T-cell (primary cell): ENCODE measurements at regions of chr5 and their contacts with region 1.

Region 1: DNA sequence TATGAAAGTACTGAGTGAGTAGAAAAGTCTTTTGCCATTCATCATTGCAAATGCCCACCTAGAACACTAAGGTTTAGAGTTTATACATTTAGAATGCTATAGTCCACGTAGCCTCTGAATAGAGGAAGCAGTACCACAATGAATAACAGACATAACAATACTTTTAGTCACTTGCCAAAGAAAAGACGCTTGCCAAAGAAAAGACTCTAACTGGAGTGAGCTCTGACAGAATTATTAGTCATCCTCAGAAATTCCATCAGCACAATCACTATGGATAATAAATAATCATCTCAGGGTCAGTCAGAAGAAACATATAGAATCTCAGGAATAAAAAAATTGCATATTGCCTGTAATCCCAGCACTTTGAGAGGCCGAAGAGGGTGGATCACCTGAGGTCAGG is 168.5 kb upstream of the TARS1 start:
- DNase-seq: no peak
- ATAC-seq: no peak
- H3K4me3 ChIP-seq: no peak overlapping the region
- H3K4me3 Mint-ChIP-seq: no peak overlapping the region
- H3K27ac ChIP-seq: no peak overlapping the region
- H3K27ac Mint-ChIP-seq: no peak overlapping the region
- H3K4me1 ChIP-seq: no peaks in the 10 kb centered on the region
- H3K4me1 Mint-ChIP-seq: no peaks in the 10 kb centered on the region
- H3K27me3 ChIP-seq: no peaks in the 10 kb centered on the region
- H3K27me3 Mint-ChIP-seq: no peaks in the 10 kb centered on the region

Region 2: DNA sequence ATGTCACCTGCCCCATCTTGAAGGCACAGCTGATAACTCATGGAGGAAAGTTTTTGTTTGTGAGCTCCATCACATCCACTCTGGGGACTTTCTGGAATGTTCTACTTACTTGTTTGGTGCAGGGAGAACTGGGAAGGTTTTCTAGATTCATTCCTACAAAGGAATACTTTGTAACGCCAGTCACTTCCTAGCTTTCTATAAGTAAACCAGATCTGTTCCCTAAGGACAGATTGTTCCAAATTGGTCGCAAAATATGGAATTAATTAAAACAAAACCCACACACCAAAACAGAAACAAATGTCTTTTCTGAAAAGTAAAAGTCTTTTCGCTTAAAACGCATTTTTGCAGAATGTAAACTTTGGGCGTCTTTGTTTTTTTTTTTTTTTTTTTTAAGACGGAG is 1465.7 kb before region 1 on chr5:
- CTCF ChIA-PET with region 1: interaction called in 1 of 2 experiments, 10 read pairs
- POLR2A ChIA-PET with region 1: no interaction called
- DNase-seq: no peak
- ATAC-seq: no peak
- H3K4me3 ChIP-seq: no peak overlapping the region
- H3K4me3 Mint-ChIP-seq: no peak overlapping the region
- H3K27ac ChIP-seq: no peak overlapping the region
- H3K27ac Mint-ChIP-seq: no peak overlapping the region
- H3K4me1 ChIP-seq: no peaks in the 10 kb centered on the region
- H3K4me1 Mint-ChIP-seq: no peaks in the 10 kb centered on the region
- H3K27me3 ChIP-seq: no peaks in the 10 kb centered on the region
- H3K27me3 Mint-ChIP-seq: peaks cover 4 to 7% of the 10 kb centered on the region in 2 donors

Region 3: DNA sequence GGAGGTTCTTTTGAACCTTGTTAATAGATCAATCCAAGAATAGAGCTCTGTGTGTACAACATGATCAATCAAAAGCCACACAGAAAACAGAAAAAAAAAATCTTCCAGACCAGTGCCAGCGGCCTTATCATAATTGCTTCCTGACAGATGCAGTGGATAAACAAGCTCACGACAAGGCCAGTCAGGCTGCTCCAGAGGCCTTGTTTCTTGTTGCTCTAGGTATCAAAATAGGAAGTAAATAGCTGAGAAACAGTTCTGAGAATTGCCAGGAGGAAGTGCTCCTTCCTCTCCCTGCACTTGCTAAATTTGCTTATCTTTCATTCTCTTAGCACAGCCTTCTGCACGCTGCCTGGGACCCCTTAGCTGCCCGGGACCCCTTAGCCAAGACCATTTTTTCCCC is 30.5 kb before region 1 on chr5:
- CTCF ChIA-PET with region 1: no interaction called
- POLR2A ChIA-PET with region 1: no interaction called
- DNase-seq: no peak
- ATAC-seq: no peak
- H3K4me3 ChIP-seq: no peak overlapping the region
- H3K4me3 Mint-ChIP-seq: no peak overlapping the region
- H3K27ac ChIP-seq: no peak overlapping the region
- H3K27ac Mint-ChIP-seq: no peak overlapping the region
- H3K4me1 ChIP-seq: peaks cover 0 to 4% of the 10 kb centered on the region in 2 experiments
- H3K4me1 Mint-ChIP-seq: peaks cover 0 to 9% (median 6%) of the 10 kb centered on the region in 3 donors
- H3K27me3 ChIP-seq: no peaks in the 10 kb centered on the region
- H3K27me3 Mint-ChIP-seq: peaks cover 2 to 3% of the 10 kb centered on the region in 2 donors